CD8-positive, alpha-beta T cell (primary cell): ENCODE measurements at regions of chr2 and their contacts with region 1.

Region 1: DNA sequence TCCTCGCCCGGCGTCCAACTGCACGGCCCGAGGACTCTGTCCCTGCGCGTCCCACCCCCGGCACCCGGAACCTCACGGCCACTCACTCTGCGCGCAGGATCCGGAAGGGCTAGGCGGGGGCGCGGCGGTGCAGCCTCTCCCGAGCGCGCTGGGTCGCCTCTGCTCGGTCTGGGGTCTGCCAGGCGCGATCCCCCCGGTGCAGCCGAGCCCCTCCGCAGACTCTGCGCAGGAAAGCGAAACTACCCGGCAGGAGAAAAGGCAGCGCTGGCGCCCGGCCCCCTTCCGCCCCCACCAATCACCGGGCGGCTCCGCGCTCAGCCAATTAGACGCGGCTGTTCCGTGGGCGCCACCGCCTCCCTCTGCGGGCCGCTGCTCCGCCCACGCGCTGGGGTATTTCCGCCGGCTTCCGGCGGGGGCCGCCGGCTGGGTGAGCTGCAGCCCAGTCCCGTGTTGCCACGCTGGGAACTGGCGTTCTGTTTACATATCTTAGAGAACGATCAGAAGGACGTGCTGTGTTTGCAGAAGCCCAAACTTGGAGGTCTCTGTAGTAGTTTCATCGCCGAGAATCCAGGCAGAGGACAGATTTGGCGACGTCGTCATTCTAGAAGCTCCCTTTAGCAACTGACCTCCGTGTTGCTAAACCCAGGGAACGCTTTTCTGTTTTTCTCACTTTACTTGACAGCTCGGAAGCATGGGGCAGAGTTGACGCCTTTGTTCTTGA is at the start of gene STAT1:
- DNase-seq: peak; percentile 93 to 98 (median 96)
- ATAC-seq: peak; percentile 87
- H3K4me3 ChIP-seq: peak within 1 kb of the TSS; percentile 61 to 88
- H3K4me3 Mint-ChIP-seq: no peak within 1 kb of the TSS
- H3K27ac ChIP-seq: peak within 1 kb of the TSS; percentile 91 to 94
- H3K27ac Mint-ChIP-seq: no peak within 1 kb of the TSS
- H3K4me1 ChIP-seq: peaks cover 59% of the 10 kb centered on the region
- H3K4me1 Mint-ChIP-seq: peaks cover 44% of the 10 kb centered on the region
- H3K27me3 ChIP-seq: no peaks in the 10 kb centered on the region
- H3K27me3 Mint-ChIP-seq: no peaks in the 10 kb centered on the region
- CTCF ChIP-seq: no peak
- total RNA-seq, gene STAT1: 66.7 to 69.9 TPM

Region 2: GRCh38 chr2:189674374-189675112 is 1339.5 kb before region 1 on chr2 and contains the start of gene ANKAR:
- CTCF ChIA-PET with region 1: no interaction called
- POLR2A ChIA-PET with region 1: no interaction called
- intact Hi-C with region 1: loop called in 1 of 2 experiments (anchors 5 kb)
- DNase-seq: peak; percentile 64 to 91 (median 79)
- ATAC-seq: peak; percentile 91
- H3K4me3 ChIP-seq: peak within 1 kb of the TSS; percentile 81 to 88
- H3K4me3 Mint-ChIP-seq: peak within 1 kb of the TSS; percentile 91
- H3K27ac ChIP-seq: peak within 1 kb of the TSS; percentile 86 to 97
- H3K27ac Mint-ChIP-seq: peak within 1 kb of the TSS; percentile 99
- H3K4me1 ChIP-seq: peaks cover 11% of the 10 kb centered on the region
- H3K4me1 Mint-ChIP-seq: peaks cover 49% of the 10 kb centered on the region
- H3K27me3 ChIP-seq: no peaks in the 10 kb centered on the region
- H3K27me3 Mint-ChIP-seq: no peaks in the 10 kb centered on the region
- CTCF ChIP-seq: peak; percentile 72
- total RNA-seq, gene ANKAR: 7.3 to 9.2 TPM

Region 3: DNA sequence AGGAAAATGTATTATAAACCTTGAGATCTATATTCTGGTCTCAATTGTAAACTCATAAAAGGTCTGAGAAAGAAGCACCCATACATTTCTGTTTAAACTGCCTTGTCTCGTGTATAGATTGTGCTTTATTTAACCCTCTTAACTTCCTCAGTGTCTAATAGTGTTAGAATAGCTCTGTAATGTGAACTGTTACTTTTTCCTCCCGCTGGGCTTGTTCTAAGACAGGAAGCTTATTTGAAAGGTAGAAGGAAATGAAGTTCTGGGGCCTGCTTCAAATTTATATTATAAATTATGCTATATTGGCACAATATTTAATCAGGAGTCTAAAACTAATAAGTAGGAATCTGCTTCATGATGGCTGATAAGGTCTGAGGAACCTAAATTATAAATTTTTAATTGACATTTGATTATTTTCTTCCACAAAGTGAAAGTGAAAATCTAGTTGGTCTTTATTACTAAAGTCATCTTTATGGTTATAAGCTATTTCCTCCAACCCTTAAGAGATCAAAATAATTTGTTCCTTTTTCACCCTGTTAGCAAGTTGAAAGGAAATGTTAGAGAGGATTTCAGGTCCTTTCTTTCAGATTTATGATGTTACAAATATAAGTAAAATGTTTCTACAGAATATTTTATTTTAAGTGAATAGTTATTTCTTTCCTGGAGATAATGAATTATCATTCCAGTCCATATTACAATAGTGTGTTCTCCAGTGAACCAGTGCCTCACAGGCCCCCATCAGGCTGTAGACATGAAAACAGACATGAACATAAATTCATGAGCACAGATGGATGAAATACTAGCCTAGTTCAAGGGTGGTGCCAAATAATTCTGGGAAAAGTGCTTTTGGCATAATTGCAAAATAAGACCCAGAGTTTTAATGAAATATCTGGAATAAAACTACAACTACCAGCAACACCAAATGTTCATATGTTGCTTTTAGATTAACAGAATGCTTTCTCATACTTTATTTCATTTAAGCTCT is 598.0 kb before region 1 on chr2:
- CTCF ChIA-PET with region 1: no interaction called
- POLR2A ChIA-PET with region 1: no interaction called
- intact Hi-C with region 1: loop called in 1 of 2 experiments (anchors 5 kb)
- DNase-seq: peak in 1 of 9 experiments; percentile 43
- ATAC-seq: peak; percentile 62
- H3K4me3 ChIP-seq: peak overlapping the region in 1 of 2 experiments; percentile 6
- H3K4me3 Mint-ChIP-seq: peak overlapping the region; percentile 64
- H3K27ac ChIP-seq: peak overlapping the region; percentile 32 to 76
- H3K27ac Mint-ChIP-seq: peak overlapping the region; percentile 86
- H3K4me1 ChIP-seq: peaks cover 92% of the 10 kb centered on the region
- H3K4me1 Mint-ChIP-seq: peaks cover 89% of the 10 kb centered on the region
- H3K27me3 ChIP-seq: no peaks in the 10 kb centered on the region
- H3K27me3 Mint-ChIP-seq: no peaks in the 10 kb centered on the region
- CTCF ChIP-seq: no peak

Region 4: GRCh38 chr2:190648289-190649034 is 365.6 kb before region 1 on chr2:
- CTCF ChIA-PET with region 1: no interaction called
- POLR2A ChIA-PET with region 1: no interaction called
- intact Hi-C with region 1: loop called in 1 of 2 experiments (anchors 10 kb)
- DNase-seq: peak; percentile 80 to 97 (median 88)
- ATAC-seq: peak; percentile 81
- H3K4me3 ChIP-seq: peak overlapping the region; percentile 58 to 63
- H3K4me3 Mint-ChIP-seq: peak overlapping the region; percentile 84
- H3K27ac ChIP-seq: peak overlapping the region; percentile 63 to 84
- H3K27ac Mint-ChIP-seq: peak overlapping the region; percentile 88
- H3K4me1 ChIP-seq: peaks cover 26% of the 10 kb centered on the region
- H3K4me1 Mint-ChIP-seq: peaks cover 44% of the 10 kb centered on the region
- H3K27me3 ChIP-seq: no peaks in the 10 kb centered on the region
- H3K27me3 Mint-ChIP-seq: no peaks in the 10 kb centered on the region
- CTCF ChIP-seq: no peak

Region 5: GRCh38 chr2:190996338-190996946 is 17.6 kb before region 1 on chr2:
- CTCF ChIA-PET with region 1: interaction called, 19 read pairs
- POLR2A ChIA-PET with region 1: interaction called, 4 read pairs
- intact Hi-C with region 1: loop called in 1 of 2 experiments (anchors 2 kb)
- DNase-seq: peak in 4 of 9 experiments; percentile 46 to 71 (median 57)
- ATAC-seq: peak; percentile 86
- H3K4me3 ChIP-seq: no peak overlapping the region
- H3K4me3 Mint-ChIP-seq: no peak overlapping the region
- H3K27ac ChIP-seq: peak overlapping the region in 1 of 2 experiments; percentile 28
- H3K27ac Mint-ChIP-seq: peak overlapping the region; percentile 82
- H3K4me1 ChIP-seq: no peaks in the 10 kb centered on the region
- H3K4me1 Mint-ChIP-seq: peaks cover 61% of the 10 kb centered on the region
- H3K27me3 ChIP-seq: no peaks in the 10 kb centered on the region
- H3K27me3 Mint-ChIP-seq: no peaks in the 10 kb centered on the region
- CTCF ChIP-seq: peak; percentile 56